SK-N-SH (cell line): ENCODE measurements at regions of chr2 and their contacts with region 1.

Region 1: GRCh38 chr2:108169982-108170625 is 69.7 kb upstream of the SULT1C3 start:
- DNase-seq: peak; percentile 9
- H3K4me3 ChIP-seq: peak overlapping the region in 1 of 2 experiments; percentile 20; a peak in 1 of 4 replicates
- H3K27ac ChIP-seq: no peak overlapping the region
- H3K4me1 ChIP-seq: no peaks in the 10 kb centered on the region
- H3K27me3 ChIP-seq: no peaks in the 10 kb centered on the region
- CTCF ChIP-seq: peak; percentile 69
- EP300 ChIP-seq: no peak
- RAD21 ChIP-seq: peak; percentile 60

Region 2: DNA sequence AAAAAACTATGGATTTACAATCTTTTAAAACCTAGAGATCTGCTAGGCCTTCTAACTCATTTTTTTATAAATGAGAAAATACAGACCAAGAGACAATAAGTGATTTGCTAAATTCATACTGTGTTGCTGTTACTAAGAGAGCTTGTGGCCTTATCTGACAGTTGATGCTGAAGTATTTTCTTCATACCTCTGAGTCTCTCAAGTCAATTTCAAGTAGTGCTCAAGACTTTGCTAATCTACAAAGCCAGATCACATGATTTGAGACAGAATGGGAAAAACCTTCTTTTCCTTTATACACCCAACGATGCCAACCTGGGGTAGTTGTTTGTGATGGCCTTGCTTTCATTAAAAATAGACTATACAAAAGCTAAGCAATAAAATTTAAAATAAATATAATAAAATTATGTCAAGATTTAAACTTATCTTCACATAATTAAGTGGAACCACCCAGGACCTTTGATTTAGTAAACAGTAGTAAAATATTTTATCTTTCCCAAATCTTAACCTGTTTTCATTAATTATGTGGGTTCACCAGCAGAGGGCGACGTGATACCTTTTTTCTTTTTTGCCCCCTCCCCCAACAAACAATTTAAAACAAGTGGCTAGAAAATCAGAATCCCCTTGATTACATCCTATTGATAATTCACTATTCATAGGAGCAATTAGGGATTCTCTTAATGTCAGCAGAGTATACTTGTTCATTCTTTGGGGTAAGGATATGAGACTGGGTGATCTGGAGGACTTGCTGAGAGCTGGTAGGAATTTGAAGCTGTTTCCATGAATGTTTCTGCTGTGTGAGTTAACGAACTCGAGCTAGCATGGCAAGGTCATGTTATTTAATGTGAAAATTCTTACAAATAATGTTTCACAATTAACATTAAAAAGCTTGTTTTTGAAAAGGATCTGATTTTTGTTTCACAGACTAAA is 233.4 kb before region 1 on chr2:
- CTCF ChIA-PET with region 1: interaction called, 22 read pairs
- POLR2A ChIA-PET with region 1: no interaction called
- DNase-seq: peak; percentile 25
- H3K4me3 ChIP-seq: no peak overlapping the region; a peak in 1 of 4 replicates
- H3K27ac ChIP-seq: no peak overlapping the region
- H3K4me1 ChIP-seq: no peaks in the 10 kb centered on the region; a peak in 2 of 4 replicates
- H3K27me3 ChIP-seq: no peaks in the 10 kb centered on the region
- CTCF ChIP-seq: peak; percentile 71
- EP300 ChIP-seq: no peak
- RAD21 ChIP-seq: peak; percentile 75

Region 3: GRCh38 chr2:108154371-108155061 is 15.6 kb before region 1 on chr2:
- CTCF ChIA-PET with region 1: interaction called, 13 read pairs
- POLR2A ChIA-PET with region 1: no interaction called
- DNase-seq: no peak
- H3K4me3 ChIP-seq: no peak overlapping the region
- H3K27ac ChIP-seq: no peak overlapping the region
- H3K4me1 ChIP-seq: no peaks in the 10 kb centered on the region; a peak in 1 of 4 replicates
- H3K27me3 ChIP-seq: no peaks in the 10 kb centered on the region
- CTCF ChIP-seq: no peak
- EP300 ChIP-seq: no peak
- RAD21 ChIP-seq: no peak

Region 4: GRCh38 chr2:108351889-108352288 is 181.8 kb after region 1 on chr2:
- CTCF ChIA-PET with region 1: no interaction called
- POLR2A ChIA-PET with region 1: no interaction called
- DNase-seq: no peak
- H3K4me3 ChIP-seq: no peak overlapping the region
- H3K27ac ChIP-seq: no peak overlapping the region
- H3K4me1 ChIP-seq: no peaks in the 10 kb centered on the region; a peak in 1 of 4 replicates
- H3K27me3 ChIP-seq: no peaks in the 10 kb centered on the region
- CTCF ChIP-seq: no peak
- EP300 ChIP-seq: no peak
- RAD21 ChIP-seq: no peak

Region 5: DNA sequence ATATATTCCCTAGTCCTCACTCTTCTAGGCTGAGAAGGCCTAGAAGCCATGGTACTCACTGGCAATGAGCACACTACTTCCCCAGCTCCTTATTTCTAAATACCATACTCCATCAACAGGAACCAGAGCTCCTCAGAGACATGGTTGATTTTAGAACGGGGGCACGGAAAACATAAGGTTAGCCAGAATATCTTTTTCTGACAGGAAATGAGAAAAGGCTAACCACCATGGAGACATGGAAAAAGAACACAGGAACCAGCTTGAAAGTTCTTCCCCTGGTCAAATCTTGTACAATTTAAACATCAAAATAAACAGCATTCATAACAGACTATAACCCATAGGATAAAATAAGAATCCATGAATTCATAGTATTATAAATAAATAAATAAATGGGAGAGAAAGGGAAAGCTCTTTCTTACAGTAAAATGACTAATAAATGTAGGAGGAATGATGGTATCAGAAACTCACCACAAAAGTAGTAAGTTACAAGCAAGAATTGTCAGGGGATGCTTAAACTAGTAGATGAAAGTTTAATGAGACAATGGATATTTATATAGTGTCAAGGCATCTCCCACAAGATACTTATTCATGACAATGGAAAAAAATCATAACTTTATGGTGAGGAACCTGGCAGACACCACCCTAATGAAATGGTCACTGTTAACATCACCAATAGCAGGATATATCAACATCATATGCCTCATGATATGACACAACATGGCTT is 258.3 kb after region 1 on chr2:
- CTCF ChIA-PET with region 1: no interaction called
- POLR2A ChIA-PET with region 1: no interaction called
- DNase-seq: no peak
- H3K4me3 ChIP-seq: no peak overlapping the region
- H3K27ac ChIP-seq: no peak overlapping the region
- H3K4me1 ChIP-seq: no peaks in the 10 kb centered on the region
- H3K27me3 ChIP-seq: no peaks in the 10 kb centered on the region
- CTCF ChIP-seq: no peak
- EP300 ChIP-seq: no peak
- RAD21 ChIP-seq: no peak

Region 6: DNA sequence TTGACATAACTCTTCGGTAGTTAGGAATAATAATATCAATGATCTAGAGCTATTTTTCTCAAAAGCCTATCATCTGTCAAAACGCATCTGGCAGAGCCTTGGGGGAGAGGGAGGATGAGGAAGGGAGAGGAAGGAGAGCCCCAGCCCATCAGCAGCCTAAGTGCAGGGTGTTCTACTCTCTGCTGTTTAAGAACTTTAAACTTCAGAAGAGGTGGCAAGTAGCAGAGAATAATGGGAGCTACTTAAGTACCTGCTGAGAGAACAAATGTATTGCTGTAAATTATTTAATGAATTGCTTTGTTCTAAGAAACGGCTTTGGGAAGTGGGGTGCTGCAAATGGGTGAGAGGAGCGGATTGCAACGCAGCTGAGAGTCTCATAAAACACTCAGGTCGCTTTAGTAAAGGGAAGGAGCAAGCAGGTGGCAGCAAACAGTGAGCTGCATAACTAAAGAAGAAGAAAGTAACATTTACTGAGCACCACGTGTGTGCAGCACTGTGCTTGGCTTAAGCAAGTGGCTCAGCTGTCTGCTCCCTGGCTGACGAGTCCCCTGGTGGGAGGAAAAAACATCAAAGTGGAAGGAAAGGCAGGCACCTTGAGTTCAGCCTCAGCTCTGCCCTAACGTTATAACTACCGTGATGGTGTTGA is 932.6 kb after region 1 on chr2:
- CTCF ChIA-PET with region 1: no interaction called
- POLR2A ChIA-PET with region 1: no interaction called
- DNase-seq: no peak
- H3K4me3 ChIP-seq: no peak overlapping the region
- H3K27ac ChIP-seq: no peak overlapping the region
- H3K4me1 ChIP-seq: no peaks in the 10 kb centered on the region
- H3K27me3 ChIP-seq: peaks cover 8% of the 10 kb centered on the region; the same call in 1 of the 2 replicates
- CTCF ChIP-seq: no peak
- EP300 ChIP-seq: no peak
- RAD21 ChIP-seq: no peak